Activated CD4-positive, alpha-beta memory T cell treated with anti-CD3 and anti-CD28 coated beads for 36 hours (primary cell): ENCODE measurements at regions of chr12 and their contacts with region 1.

Region 1: DNA sequence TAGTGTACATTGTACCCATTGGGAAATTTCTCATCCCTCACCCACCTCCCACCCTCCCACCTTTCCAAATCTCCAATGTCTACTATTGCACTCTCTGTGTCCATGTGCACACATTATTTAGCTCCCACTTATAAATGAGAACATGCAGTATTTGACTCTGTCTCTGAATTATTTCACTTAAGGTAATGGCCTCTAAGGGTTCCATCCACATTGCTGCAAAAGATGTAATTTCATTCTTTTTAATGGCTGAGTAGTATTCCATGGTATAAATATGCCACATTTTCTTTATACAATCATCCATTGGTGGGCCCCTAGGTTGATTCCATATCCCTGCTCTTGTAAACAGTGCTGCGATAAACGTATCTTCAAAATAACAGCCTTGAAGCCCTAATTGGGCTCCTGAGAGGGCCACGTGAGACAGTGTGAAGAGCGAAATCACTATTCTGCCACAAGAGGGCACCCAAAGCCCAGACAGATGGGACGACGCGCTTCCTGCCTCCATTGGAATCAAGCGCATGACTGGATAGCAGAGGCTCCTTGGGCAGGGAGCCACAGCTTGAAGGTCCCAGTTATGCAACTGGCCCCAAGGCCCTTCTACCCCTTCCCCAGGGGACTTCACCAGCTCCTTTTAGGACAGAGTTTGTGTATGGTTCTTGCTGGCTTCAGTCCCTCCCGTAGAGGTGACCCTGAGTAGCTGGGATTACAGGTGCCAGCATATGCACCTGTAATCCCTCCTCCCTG is 21.3 kb upstream of the CD27 start:
- DNase-seq: peak; percentile 86
- H3K4me3 Mint-ChIP-seq: no peak overlapping the region
- H3K27ac Mint-ChIP-seq: peak overlapping the region; percentile 69
- H3K4me1 Mint-ChIP-seq: peaks cover 43% of the 10 kb centered on the region
- H3K27me3 Mint-ChIP-seq: peaks cover 3% of the 10 kb centered on the region

Region 2: DNA sequence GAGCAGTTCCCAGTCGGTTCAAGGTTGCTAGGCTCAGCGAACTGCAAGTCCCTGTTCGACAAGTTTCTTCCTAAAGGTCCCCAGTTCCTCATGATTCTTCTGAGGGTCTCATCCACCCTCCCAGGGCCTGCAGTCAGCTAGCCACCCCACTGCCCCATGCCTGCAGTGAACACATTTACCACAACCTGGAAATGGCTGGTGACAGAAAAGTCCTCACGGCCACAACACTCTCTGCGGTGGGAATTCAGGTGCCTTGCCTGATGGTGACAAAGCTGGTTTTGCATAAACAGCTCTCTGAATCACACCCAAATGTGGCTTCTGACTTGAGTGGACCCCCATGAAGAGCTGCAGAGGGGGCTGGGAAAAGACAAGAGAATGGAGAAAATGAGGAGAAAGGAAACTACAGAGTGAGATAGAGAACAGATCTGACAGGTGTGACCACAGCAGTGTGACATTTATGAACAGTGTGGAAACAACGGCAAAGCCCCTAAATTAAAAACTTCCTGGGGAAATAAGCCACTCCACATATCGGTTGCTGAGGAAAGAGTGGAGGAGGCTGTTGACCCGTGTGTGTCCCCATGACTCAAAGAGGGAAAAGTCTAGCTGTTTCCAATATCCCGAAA is 20.0 kb after region 1 on chr12:
- CTCF ChIA-PET with region 1: interaction called, 19 read pairs
- POLR2A ChIA-PET with region 1: interaction called, 26 read pairs
- intact Hi-C with region 1: loop called (anchors 1 kb)
- DNase-seq: peak; percentile 75
- H3K4me3 Mint-ChIP-seq: peak overlapping the region; percentile 91
- H3K27ac Mint-ChIP-seq: peak overlapping the region; percentile 98
- H3K4me1 Mint-ChIP-seq: peaks cover 69% of the 10 kb centered on the region
- H3K27me3 Mint-ChIP-seq: no peaks in the 10 kb centered on the region

Region 3: DNA sequence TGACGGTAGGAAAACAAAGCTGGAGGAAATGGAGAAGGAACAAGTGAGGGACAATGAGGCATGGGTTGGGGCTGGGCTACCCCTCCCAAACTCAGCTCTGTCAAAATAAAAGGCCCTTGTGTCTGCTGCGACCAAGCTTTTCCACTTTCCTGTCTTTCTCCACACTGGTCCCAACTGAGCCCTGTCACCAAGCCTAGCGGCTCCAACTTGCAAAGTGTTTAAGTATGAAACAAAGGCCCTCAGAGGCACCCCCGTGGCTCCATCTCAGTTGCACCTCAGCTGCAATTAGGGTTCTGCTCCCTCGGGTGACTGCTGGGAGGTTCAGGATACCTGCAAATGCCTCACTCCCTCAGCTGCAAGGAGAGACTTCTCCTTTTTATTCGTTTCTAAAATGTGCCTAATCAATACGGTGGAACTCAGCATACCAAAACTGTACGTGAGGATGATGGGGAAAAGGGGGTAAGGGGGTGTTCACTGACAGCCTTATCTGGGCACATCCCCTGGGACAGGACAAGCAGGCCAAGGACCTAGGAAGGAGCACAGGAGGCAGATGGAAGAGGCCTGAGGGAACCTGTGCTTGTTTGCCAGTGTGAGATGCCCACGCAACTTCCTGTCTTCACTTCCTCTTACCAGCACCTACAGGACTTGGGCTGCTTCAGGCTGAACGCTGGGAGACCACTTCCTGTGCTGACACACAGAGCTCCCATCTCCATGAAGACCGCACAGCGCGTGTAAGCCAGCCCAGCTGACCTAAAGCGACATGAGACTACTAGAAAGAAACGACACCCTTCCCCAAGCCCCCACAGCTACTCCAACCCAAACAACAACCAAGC is 38.2 kb after region 1 on chr12:
- CTCF ChIA-PET with region 1: interaction called, 288 read pairs
- POLR2A ChIA-PET with region 1: interaction called, 80 read pairs
- intact Hi-C with region 1: loop called (anchors 1 kb)
- DNase-seq: peak; percentile 92
- H3K4me3 Mint-ChIP-seq: peak overlapping the region; percentile 76
- H3K27ac Mint-ChIP-seq: peak overlapping the region; percentile 99
- H3K4me1 Mint-ChIP-seq: peaks cover 87% of the 10 kb centered on the region
- H3K27me3 Mint-ChIP-seq: no peaks in the 10 kb centered on the region

Region 4: DNA sequence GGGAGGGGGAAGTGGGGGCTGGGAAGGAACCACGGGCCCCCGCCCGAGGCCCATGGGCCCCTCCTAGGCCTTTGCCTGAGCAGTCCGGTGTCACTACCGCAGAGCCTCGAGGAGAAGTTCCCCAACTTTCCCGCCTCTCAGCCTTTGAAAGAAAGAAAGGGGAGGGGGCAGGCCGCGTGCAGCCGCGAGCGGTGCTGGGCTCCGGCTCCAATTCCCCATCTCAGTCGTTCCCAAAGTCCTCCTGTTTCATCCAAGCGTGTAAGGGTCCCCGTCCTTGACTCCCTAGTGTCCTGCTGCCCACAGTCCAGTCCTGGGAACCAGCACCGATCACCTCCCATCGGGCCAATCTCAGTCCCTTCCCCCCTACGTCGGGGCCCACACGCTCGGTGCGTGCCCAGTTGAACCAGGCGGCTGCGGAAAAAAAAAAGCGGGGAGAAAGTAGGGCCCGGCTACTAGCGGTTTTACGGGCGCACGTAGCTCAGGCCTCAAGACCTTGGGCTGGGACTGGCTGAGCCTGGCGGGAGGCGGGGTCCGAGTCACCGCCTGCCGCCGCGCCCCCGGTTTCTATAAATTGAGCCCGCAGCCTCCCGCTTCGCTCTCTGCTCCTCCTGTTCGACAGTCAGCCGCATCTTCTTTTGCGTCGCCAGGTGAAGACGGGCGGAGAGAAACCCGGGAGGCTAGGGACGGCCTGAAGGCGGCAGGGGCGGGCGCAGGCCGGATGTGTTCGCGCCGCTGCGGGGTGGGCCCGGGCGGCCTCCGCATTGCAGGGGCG is 110.7 kb after region 1 on chr12 and contains the start of gene GAPDH:
- CTCF ChIA-PET with region 1: interaction called, 61 read pairs
- POLR2A ChIA-PET with region 1: interaction called, 35 read pairs
- intact Hi-C with region 1: loop called (anchors 1 kb)
- DNase-seq: peak; percentile 93
- H3K4me3 Mint-ChIP-seq: peak within 1 kb of the TSS; percentile 96
- H3K27ac Mint-ChIP-seq: peak within 1 kb of the TSS; percentile 100
- H3K4me1 Mint-ChIP-seq: peaks cover 44% of the 10 kb centered on the region
- H3K27me3 Mint-ChIP-seq: no peaks in the 10 kb centered on the region
- total RNA-seq, gene GAPDH: 5,823 to 5,836 TPM

Region 5: DNA sequence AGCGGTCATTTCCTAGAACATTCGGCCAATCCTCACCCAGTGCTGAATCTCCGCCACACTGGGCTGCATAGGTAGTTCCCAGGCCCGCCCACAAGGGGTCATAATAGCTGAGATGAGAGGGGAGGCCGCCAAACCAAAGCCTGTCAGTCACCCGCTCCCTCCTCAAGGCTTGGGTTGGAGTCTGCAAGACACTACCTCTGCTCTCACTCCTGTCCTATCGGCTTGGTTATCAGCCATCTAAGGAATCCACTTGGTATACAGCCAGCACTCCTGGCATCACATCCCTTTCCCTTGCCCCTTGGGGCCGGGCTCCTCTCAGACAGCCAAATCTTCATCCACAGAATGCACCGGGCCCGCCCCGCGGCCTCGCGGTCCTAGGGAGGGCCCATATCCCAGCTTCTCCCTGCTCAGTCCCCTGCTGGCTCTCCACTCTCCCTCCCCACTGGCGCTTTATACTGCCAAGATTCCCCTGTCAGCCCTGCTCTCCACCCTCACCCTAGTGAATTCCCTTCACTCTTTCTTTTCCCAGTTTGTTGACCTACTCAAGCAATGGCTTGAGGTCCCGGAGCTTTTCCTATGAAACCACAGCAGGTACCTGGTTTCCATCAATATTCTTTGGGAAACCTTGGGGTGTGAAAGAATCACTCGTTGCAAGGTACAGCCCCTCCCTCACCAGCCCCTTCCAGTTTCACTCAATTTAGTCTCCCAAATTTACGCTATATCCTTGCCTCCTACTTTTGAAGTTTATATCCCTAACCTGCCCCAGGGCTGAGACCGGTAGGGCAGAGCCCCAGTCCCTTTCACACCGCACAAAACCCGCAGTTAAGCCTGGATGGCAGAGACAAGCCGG is 131.0 kb after region 1 on chr12:
- CTCF ChIA-PET with region 1: interaction called, 6 read pairs
- POLR2A ChIA-PET with region 1: interaction called, 5 read pairs
- intact Hi-C with region 1: loop called (anchors 1 kb)
- DNase-seq: peak; percentile 86
- H3K4me3 Mint-ChIP-seq: peak overlapping the region; percentile 85
- H3K27ac Mint-ChIP-seq: peak overlapping the region; percentile 60
- H3K4me1 Mint-ChIP-seq: peaks cover 38% of the 10 kb centered on the region
- H3K27me3 Mint-ChIP-seq: no peaks in the 10 kb centered on the region